ENCODE measurements at regions of chr22 and their contacts with region 1.

Region 1: GRCh38 chr22:41966607-41967240 is 2.5 kb upstream of the SEPTIN3 start:
- DNase-seq: peak; percentile 33
- H3K4me3 Mint-ChIP-seq: no peak overlapping the region
- H3K27ac Mint-ChIP-seq: no peak overlapping the region
- H3K4me1 Mint-ChIP-seq: peaks cover 6% of the 10 kb centered on the region
- H3K27me3 Mint-ChIP-seq: peaks cover 3% of the 10 kb centered on the region

Region 2: DNA sequence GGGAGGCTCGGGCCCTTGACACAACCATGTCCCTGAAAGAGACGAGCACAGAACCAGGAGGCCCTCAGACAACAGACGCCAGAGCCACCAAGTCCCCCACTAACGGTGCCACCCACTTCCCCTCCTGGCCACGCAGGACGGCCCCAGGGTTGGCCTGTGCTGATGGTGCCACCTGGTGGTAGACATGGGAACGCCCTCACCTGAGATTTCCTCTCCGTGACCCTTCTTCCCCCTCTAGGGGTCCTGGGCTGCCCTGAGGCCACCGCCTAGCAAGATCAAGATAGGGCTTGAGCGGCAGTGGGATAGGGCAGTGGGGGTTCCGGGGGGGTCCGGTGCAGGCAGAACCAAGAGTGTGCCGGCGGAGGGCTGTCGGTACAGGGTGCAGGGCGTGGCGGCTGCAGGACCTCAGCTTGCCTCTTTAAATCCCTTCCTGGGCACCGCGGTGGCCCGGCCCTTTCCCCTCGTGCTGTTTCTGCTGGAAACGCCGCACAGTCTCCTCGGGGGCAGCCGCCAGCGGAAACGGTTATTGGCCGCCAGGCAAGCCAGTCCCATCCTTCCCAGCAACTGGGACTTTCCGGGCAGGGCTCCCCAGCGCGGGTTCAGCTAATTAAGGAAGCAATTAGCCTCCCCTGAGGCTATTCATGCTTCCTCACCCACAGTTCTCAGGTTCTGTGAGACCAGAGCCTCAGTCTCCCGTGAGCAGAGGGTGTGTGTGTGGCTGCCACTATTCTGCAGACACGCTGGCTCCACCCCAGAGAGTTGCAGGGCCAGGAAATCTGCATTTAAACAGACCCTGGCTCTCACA is 471.0 kb after region 1 on chr22:
- intact Hi-C with region 1: loop called (anchors 2 kb)
- DNase-seq: peak; percentile 73
- H3K4me3 Mint-ChIP-seq: peak overlapping the region; percentile 75
- H3K27ac Mint-ChIP-seq: peak overlapping the region; percentile 52
- H3K4me1 Mint-ChIP-seq: peaks cover 22% of the 10 kb centered on the region
- H3K27me3 Mint-ChIP-seq: peaks cover 15% of the 10 kb centered on the region

Region 3: DNA sequence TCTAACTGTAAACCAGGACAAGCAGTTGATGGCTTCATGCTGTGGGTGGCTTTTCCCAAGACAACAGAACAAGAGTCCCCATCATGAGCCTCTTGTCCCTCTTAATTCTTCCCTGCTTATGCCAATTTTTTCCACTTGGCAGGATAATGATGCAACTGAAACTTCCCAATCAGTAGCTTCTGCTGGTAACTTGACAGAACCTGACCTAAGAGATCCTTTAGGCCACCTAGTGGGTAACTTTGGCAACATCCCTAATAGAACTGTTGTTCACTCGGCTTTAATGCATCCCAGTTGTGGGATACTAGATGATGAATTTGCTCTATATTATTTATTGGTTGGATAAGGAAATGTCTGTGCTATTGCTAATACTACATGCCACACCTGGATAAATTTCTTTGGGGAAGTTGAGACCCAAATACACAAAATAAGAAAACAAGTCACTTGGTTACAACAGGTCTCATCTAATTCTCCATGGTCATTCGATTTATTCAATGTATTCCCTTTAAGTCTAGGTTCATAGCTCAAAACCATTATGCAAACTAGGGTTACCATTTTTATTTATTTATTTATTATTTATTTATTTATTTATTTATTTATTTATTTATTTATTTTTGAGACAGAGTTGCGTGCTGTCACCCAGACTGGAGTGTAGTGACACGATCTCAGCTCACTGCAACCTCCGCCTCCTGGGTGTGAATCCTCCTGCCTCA is 506.9 kb after region 1 on chr22:
- intact Hi-C with region 1: loop called (anchors 2 kb)
- DNase-seq: no peak
- H3K4me3 Mint-ChIP-seq: no peak overlapping the region
- H3K27ac Mint-ChIP-seq: no peak overlapping the region
- H3K4me1 Mint-ChIP-seq: peaks cover 7% of the 10 kb centered on the region
- H3K27me3 Mint-ChIP-seq: peaks cover 6% of the 10 kb centered on the region

Measured in activated T-helper 2 cell treated with anti-CD3 and anti-CD28 coated beads, Interferon-gamma antibody, Interleukin-2, Interleukin-4, amounts not matched to agents 10 μg/mL and 5 μg/mL and 100 μg/mL, durations not matched to agents 14 hours and 24 hours and 36 hours (primary cell).